ENCODE measurements at regions of chr1 and their contacts with region 1.

Region 1: DNA sequence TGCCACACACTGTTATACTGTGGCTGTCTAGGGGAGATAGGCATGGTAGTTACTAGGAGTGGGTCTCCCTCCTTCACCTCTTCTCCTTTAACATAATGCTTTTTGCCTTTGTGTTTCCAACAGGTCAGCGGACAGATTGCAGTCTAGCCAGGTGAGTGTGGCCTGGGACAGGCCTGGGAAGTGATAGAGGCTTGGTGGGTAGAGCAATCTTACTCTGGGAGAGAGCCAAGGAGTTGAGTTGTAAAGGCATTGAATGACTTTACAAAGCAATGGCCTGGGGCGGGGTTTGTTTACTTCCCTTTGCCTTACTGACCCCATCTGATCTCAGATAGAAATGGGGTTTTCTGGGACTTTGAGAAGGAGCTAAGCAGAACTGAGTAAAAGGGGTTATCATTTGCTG is 51.0 kb upstream of the IKBKE start:
- DNase-seq: peak; percentile 66 to 89
- H3K4me3 ChIP-seq: peak overlapping the region; percentile 38; the same call in 1 of the 2 replicates
- H3K27ac ChIP-seq: peak overlapping the region; percentile 97
- H3K4me1 ChIP-seq: peaks cover 41% of the 10 kb centered on the region
- H3K27me3 ChIP-seq: no peaks in the 10 kb centered on the region
- CTCF ChIP-seq: no peak

Region 2: DNA sequence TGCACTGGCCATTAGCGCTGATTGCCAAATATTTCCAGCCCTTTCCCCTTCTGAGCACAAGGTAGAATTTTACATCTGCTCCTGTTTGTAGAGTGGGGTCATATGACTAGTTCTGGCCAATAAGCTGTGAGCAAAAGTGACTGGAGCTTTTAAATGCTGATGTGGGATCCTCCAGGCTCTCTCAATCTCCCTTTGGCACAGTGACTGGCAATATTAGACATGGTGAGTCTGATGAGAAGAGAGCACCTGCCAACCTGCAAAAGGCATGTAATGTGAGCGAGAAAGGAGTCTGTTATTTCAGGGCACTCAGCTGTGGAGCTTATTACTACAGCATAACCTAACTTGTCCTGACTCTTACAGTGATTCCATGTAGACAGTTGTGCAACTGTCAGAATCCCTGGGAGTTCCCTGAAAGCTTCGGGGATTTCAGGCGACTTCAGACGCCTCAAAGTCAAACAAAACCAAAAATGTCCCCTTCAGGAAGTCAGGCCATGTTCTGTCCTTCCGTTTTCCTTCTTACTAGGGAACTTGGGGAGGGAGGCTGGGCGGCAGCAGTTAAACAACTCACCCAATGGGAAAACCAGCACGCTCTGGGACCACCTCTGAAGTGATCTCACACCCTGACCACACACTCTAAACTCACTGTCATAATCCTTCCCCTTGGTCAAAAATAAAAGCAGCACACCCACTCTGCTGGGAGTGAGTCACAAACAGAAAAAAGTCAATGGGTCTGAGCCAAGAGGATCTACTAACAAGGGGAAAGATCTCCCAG is 84.5 kb after region 1 on chr1:
- CTCF ChIA-PET with region 1: no interaction called
- POLR2A ChIA-PET with region 1: interaction called, 11 read pairs
- intact Hi-C with region 1: no loop called
- DNase-seq: peak; percentile 74 to 97
- H3K4me3 ChIP-seq: peak overlapping the region; percentile 15; the same call in 1 of the 2 replicates
- H3K27ac ChIP-seq: peak overlapping the region; percentile 85
- H3K4me1 ChIP-seq: peaks cover 65% of the 10 kb centered on the region
- H3K27me3 ChIP-seq: no peaks in the 10 kb centered on the region
- CTCF ChIP-seq: no peak

Region 3: GRCh38 chr1:207619871-207620542 is 1200.8 kb after region 1 on chr1:
- CTCF ChIA-PET with region 1: no interaction called
- POLR2A ChIA-PET with region 1: no interaction called
- intact Hi-C with region 1: no loop called
- DNase-seq: peak; percentile 7 to 44
- H3K4me3 ChIP-seq: no peak overlapping the region
- H3K27ac ChIP-seq: no peak overlapping the region
- H3K4me1 ChIP-seq: no peaks in the 10 kb centered on the region
- H3K27me3 ChIP-seq: no peaks in the 10 kb centered on the region
- CTCF ChIP-seq: peak; percentile 85